ENCODE measurements at regions of chr20 and their contacts with region 1.

Region 1: DNA sequence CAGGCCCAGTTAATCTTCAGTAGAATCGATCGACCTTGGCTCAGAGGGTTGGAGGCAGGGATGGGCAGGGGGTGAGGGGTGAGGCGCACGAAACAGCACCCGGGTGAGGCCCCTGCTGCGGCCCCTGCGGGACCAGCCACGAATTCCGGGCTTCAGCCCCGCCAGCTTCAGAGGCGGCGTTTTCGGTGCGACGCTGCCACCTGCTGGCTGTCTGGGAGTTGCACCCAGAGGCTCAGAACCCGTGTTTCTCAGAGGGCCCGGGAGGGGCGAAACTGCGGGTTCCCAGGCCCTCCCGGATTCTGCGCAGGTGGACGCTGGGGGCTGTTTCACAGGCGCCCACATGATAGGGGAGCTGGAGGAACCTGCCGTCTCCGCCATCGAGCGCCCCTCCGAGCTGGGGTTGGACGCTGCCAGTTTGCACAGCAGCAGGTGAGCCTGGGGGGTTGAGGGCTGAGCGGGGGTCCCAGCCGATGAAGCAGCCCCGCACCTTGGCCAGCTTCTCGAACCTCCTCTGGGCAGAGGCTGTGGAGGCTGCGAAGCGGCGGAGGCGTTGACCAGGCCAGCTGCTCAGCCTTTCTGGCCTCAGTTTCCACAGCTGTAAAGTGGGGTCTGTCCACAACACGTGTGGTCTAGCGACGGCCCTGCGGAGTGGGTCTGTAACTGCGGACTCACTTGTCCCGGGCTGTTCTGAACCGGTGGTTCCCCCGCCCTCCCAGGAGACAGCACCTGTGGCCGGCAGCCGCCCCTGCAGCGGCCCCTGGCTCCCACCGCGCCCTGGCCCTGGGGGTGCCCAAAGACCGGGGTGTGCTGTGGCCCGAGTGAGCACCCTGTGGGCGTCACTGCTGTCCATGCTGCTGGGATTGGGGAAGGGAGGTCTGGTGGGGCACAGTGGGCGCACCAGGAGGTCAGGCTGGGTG is 2.5 kb upstream of the BHLHE23 start:
- DNase-seq: peak; percentile 73
- H3K4me3 ChIP-seq: peak overlapping the region; percentile 40
- H3K27ac ChIP-seq: no peak overlapping the region
- H3K4me1 ChIP-seq: peaks cover 44% of the 10 kb centered on the region
- H3K27me3 ChIP-seq: peaks cover 100% of the 10 kb centered on the region
- CTCF ChIP-seq: peak; percentile 96

Region 2: GRCh38 chr20:62874745-62875344 is 134.5 kb before region 1 on chr20:
- intact Hi-C with region 1: loop called (anchors 5 kb)
- DNase-seq: no peak
- H3K4me3 ChIP-seq: no peak overlapping the region
- H3K27ac ChIP-seq: peak overlapping the region; percentile 51
- H3K4me1 ChIP-seq: peaks cover 33% of the 10 kb centered on the region
- H3K27me3 ChIP-seq: no peaks in the 10 kb centered on the region
- CTCF ChIP-seq: no peak

Region 3: DNA sequence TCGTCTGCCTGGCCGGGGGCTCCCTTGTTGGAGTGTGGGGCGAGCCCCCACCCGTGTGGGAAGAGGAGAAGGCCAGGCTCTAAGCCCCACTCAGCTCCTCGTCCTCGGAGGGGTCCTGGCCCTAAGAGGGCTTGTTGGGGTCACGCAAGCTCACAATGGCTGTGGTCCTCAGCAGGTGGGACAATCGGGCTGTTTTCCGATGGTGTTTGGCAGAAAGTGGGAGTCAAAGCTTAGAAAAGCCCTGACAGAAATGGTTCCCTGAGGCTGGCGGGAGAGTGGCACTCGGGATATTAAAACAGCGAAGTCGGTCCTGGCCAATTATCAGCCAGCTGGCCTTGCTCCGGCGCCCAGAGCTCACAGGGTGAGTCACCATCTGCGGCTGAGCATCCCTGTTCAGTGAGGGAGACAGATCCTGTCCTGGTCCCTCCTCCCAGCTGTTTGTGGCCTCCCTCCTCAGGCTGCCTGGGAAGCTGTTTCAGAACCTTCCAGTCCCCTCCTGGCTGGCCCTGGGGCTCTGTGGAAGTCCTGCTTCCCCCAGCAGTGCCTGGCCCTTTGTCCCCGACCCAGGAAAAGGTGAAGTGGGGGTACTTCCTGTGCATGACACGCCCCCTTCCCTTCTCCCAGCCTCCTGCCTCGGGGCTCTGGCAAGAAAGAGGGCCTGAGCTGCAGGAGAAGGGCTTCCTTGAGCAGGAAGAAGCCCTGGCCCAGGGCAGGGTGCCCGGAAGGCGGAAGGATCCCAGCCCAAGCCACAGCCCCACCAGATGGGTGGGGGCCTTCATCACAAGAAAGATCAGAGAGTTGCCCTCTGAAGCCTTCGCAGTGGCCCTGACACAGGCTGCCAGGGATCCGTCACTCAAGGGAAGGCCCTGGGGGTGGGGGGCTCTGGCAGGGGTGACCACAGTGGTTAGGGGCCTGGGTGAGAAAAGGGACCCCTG is 51.0 kb after region 1 on chr20:
- intact Hi-C with region 1: no loop called
- DNase-seq: peak; percentile 10
- H3K4me3 ChIP-seq: no peak overlapping the region
- H3K27ac ChIP-seq: no peak overlapping the region
- H3K4me1 ChIP-seq: peaks cover 8% of the 10 kb centered on the region
- H3K27me3 ChIP-seq: peaks cover 92% of the 10 kb centered on the region
- CTCF ChIP-seq: no peak

Measured in left ventricle myocardium inferior (tissue), 1 donor.